Naive thymus-derived CD4-positive, alpha-beta T cell (primary cell): ENCODE measurements at regions of chr16 and their contacts with region 1.

Region 1: DNA sequence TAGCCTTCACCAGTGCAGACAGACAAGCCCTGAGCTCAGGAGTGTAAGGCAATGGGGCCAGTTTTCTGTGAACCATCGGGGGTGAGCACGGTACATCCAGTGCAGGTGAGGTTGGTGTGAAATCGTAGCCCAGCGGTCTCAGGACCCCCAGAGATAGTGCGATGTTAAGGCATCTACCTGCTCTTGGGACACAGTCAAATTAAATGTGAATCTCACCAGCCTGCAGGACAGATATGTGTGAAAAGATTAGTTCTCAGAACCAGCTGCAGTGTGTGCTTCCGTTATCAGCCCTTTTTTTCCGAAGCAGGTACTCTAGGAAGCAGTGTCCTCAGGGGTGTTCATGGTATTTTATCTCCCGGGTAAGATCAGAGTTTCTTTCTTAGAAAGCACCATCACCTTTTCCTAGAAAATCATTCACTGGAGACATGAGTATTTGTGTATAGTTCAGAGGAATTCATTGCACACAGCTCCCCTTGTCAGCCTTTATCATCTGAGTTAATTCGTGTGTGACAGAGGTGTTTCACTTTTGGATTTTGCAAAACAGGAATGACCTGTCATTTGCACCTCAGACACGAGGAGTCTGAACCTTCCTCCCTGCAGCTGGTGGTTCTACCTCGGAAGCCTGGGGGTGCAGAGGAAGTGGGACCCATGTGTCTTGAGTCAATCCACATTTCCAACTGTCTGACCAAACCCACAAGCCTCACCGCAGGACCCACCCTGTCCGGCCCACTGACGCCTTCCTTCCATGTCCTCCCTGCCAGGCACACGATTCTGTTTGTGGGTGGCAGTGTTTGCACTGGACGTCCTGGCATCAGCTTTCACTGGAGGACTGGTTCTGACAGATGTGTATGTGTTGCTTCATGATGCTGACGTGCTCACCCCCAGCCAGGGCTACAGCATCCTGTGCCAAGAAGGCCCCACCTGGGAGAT is 107.8 kb downstream of the CLEC16A start:
- DNase-seq: peak in 2 of 9 donors; percentile 11 to 81
- ATAC-seq: peak; percentile 74
- H3K4me3 ChIP-seq: no peak overlapping the region
- H3K4me3 Mint-ChIP-seq: peak overlapping the region in 8 of 10 donors; percentile 9 to 74 (median 48)
- H3K27ac ChIP-seq: peak overlapping the region; percentile 24
- H3K27ac Mint-ChIP-seq: peak overlapping the region; percentile 20 to 86 (median 60)
- H3K4me1 ChIP-seq: peaks cover 18 to 26% of the 10 kb centered on the region in 2 donors
- H3K4me1 Mint-ChIP-seq: peaks cover 28 to 87% (median 48%) of the 10 kb centered on the region in 7 donors
- H3K27me3 ChIP-seq: no peaks in the 10 kb centered on the region
- H3K27me3 Mint-ChIP-seq: no peaks in the 10 kb centered on the region

Region 2: DNA sequence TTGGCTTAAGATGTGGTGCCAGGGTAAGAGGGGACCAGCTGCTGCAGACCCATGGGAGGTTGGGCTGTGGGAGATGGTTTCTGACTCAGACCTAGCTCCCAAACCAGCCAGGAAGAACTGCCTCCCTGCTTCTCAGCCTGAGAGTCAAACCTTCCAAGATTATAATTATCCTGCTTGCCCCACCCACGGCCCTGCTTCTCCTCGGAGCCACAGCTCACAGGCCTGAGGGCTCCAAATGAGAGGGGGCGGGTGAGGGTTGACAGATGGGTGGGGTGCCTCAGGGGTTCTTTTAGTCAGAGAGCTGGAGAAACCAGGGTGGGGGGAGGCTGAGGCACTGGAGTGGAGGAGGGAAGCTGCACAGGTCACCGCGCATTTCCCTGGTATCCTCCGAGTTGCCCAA is 841.2 kb before region 1 on chr16:
- CTCF ChIA-PET with region 1: no interaction called
- POLR2A ChIA-PET with region 1: no interaction called
- intact Hi-C with region 1: no loop called
- DNase-seq: no peak
- ATAC-seq: no peak
- H3K4me3 ChIP-seq: no peak overlapping the region
- H3K4me3 Mint-ChIP-seq: no peak overlapping the region
- H3K27ac ChIP-seq: no peak overlapping the region
- H3K27ac Mint-ChIP-seq: no peak overlapping the region
- H3K4me1 ChIP-seq: no peaks in the 10 kb centered on the region
- H3K4me1 Mint-ChIP-seq: no peaks in the 10 kb centered on the region
- H3K27me3 ChIP-seq: no peaks in the 10 kb centered on the region
- H3K27me3 Mint-ChIP-seq: peaks cover 2 to 50% (median 14%) of the 10 kb centered on the region in 5 donors

Region 3: DNA sequence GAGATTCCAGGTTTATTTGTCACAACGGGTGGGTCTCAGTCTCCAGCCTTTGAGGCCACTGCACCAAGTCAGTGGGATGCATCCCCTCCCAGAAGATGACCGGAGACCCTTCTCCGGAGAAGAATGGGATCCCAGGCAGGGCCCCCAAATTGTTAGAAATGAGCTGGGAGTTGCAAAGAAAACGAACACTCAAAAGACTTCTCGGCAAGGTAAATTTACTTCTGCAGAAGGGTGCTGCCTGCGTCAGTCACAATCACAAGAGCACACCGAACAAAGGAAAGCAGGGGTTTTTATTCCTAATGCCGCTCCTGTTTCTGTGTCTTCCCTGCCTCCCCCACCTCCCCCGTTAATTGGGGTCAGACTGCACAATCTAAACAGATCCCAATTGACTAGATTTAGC is 604.9 kb before region 1 on chr16:
- CTCF ChIA-PET with region 1: no interaction called
- POLR2A ChIA-PET with region 1: no interaction called
- intact Hi-C with region 1: no loop called
- DNase-seq: no peak
- ATAC-seq: no peak
- H3K4me3 ChIP-seq: no peak overlapping the region
- H3K4me3 Mint-ChIP-seq: no peak overlapping the region
- H3K27ac ChIP-seq: no peak overlapping the region
- H3K27ac Mint-ChIP-seq: no peak overlapping the region
- H3K4me1 ChIP-seq: no peaks in the 10 kb centered on the region
- H3K4me1 Mint-ChIP-seq: peaks cover 0 to 15% (median 10%) of the 10 kb centered on the region in 7 donors
- H3K27me3 ChIP-seq: no peaks in the 10 kb centered on the region
- H3K27me3 Mint-ChIP-seq: no peaks in the 10 kb centered on the region

Region 4: GRCh38 chr16:10964039-10964890 is 87.9 kb before region 1 on chr16:
- CTCF ChIA-PET with region 1: no interaction called
- POLR2A ChIA-PET with region 1: no interaction called
- intact Hi-C with region 1: loop called in 1 of 2 experiments (anchors 1 kb)
- DNase-seq: peak; percentile 55 to 84 (median 69)
- ATAC-seq: peak; percentile 81
- H3K4me3 ChIP-seq: peak overlapping the region; percentile 3
- H3K4me3 Mint-ChIP-seq: peak overlapping the region in 6 of 10 donors; percentile 4 to 83 (median 52)
- H3K27ac ChIP-seq: no peak overlapping the region
- H3K27ac Mint-ChIP-seq: peak overlapping the region in 6 of 9 donors; percentile 47 to 91 (median 72)
- H3K4me1 ChIP-seq: peaks cover 11 to 18% of the 10 kb centered on the region in 2 donors
- H3K4me1 Mint-ChIP-seq: peaks cover 15 to 62% (median 28%) of the 10 kb centered on the region in 7 donors
- H3K27me3 ChIP-seq: no peaks in the 10 kb centered on the region
- H3K27me3 Mint-ChIP-seq: no peaks in the 10 kb centered on the region

Region 5: GRCh38 chr16:10988164-10988803 is 63.9 kb before region 1 on chr16:
- CTCF ChIA-PET with region 1: no interaction called
- POLR2A ChIA-PET with region 1: no interaction called
- intact Hi-C with region 1: loop called in 1 of 2 experiments (anchors 1 kb)
- DNase-seq: peak in 1 of 9 donors; percentile 71
- ATAC-seq: peak; percentile 51
- H3K4me3 ChIP-seq: no peak overlapping the region
- H3K4me3 Mint-ChIP-seq: peak overlapping the region; percentile 45 to 90 (median 68)
- H3K27ac ChIP-seq: no peak overlapping the region
- H3K27ac Mint-ChIP-seq: peak overlapping the region in 8 of 9 donors; percentile 2 to 80 (median 59)
- H3K4me1 ChIP-seq: peaks cover 20 to 22% of the 10 kb centered on the region in 2 donors
- H3K4me1 Mint-ChIP-seq: peaks cover 37 to 84% (median 40%) of the 10 kb centered on the region in 7 donors
- H3K27me3 ChIP-seq: no peaks in the 10 kb centered on the region
- H3K27me3 Mint-ChIP-seq: no peaks in the 10 kb centered on the region

Region 6: GRCh38 chr16:11032922-11033291 is 19.2 kb before region 1 on chr16:
- CTCF ChIA-PET with region 1: no interaction called
- POLR2A ChIA-PET with region 1: no interaction called
- intact Hi-C with region 1: no loop called
- DNase-seq: no peak
- ATAC-seq: no peak
- H3K4me3 ChIP-seq: no peak overlapping the region
- H3K4me3 Mint-ChIP-seq: no peak overlapping the region
- H3K27ac ChIP-seq: no peak overlapping the region
- H3K27ac Mint-ChIP-seq: peak overlapping the region in 3 of 9 donors; percentile 43 to 63 (median 47)
- H3K4me1 ChIP-seq: no peaks in the 10 kb centered on the region
- H3K4me1 Mint-ChIP-seq: peaks cover 0 to 29% (median 0%) of the 10 kb centered on the region in 7 donors
- H3K27me3 ChIP-seq: no peaks in the 10 kb centered on the region
- H3K27me3 Mint-ChIP-seq: no peaks in the 10 kb centered on the region

Region 7: GRCh38 chr16:11076259-11077018 is 24.3 kb after region 1 on chr16:
- CTCF ChIA-PET with region 1: no interaction called
- POLR2A ChIA-PET with region 1: no interaction called
- intact Hi-C with region 1: loop called in 1 of 2 experiments (anchors 2 kb)
- DNase-seq: peak in 1 of 9 donors; percentile 75
- ATAC-seq: peak; percentile 65
- H3K4me3 ChIP-seq: no peak overlapping the region
- H3K4me3 Mint-ChIP-seq: peak overlapping the region in 1 of 10 donors; percentile 62
- H3K27ac ChIP-seq: no peak overlapping the region
- H3K27ac Mint-ChIP-seq: peak overlapping the region in 7 of 9 donors; percentile 24 to 83 (median 66)
- H3K4me1 ChIP-seq: peaks cover 5 to 24% of the 10 kb centered on the region in 2 donors
- H3K4me1 Mint-ChIP-seq: peaks cover 27 to 91% (median 54%) of the 10 kb centered on the region in 7 donors
- H3K27me3 ChIP-seq: no peaks in the 10 kb centered on the region
- H3K27me3 Mint-ChIP-seq: no peaks in the 10 kb centered on the region

Region 8: DNA sequence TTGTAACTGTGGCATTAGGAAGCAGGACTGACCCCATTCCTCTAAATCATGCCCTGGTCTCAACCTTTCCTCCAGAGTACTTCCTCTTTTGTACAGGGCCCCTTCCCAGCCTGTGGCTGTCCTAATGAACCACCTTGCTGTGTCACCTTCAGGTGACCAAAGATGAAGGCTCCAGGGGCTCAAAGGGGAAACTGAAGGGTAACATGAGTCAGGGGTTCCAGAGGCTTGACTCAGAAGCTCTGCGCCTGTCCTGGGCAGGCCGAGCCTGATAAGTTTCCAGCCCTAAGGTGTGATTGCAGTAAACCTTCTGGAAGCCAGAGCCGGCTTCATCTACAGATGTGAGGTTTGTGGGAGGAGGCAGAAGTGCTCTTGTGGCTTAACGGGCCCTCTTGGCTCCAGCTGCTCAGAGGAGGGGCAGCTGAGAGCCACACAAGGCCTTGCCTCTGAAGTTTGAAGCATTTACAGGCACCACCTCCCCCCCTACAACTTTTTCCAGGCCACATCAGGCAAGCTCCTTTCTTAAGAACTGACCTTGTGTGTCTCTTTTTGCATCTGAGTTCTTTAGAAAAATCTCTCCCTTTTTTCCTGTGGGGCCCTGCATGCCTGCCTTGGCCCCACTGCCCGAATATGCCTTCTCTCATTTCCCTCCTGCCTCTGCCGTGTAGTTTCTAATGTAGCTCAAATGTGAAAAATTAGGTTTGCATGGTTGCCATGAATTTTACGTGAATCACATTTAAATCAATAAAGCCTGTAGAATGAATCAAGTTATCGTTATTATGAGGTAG is 42.1 kb after region 1 on chr16:
- CTCF ChIA-PET with region 1: no interaction called
- POLR2A ChIA-PET with region 1: no interaction called
- intact Hi-C with region 1: loop called in 1 of 2 experiments (anchors 1 kb)
- DNase-seq: peak in 2 of 9 donors; percentile 7 to 68
- ATAC-seq: peak; percentile 53
- H3K4me3 ChIP-seq: no peak overlapping the region
- H3K4me3 Mint-ChIP-seq: peak overlapping the region in 9 of 10 donors; percentile 29 to 71 (median 63)
- H3K27ac ChIP-seq: peak overlapping the region; percentile 55
- H3K27ac Mint-ChIP-seq: peak overlapping the region; percentile 67 to 92 (median 85)
- H3K4me1 ChIP-seq: peaks cover 19 to 33% of the 10 kb centered on the region in 2 donors
- H3K4me1 Mint-ChIP-seq: peaks cover 21 to 70% (median 42%) of the 10 kb centered on the region in 7 donors
- H3K27me3 ChIP-seq: no peaks in the 10 kb centered on the region
- H3K27me3 Mint-ChIP-seq: no peaks in the 10 kb centered on the region

Region 9: GRCh38 chr16:11224096-11224893 is 172.2 kb after region 1 on chr16:
- CTCF ChIA-PET with region 1: no interaction called
- POLR2A ChIA-PET with region 1: no interaction called
- intact Hi-C with region 1: loop called in 1 of 2 experiments (anchors 2 kb)
- DNase-seq: peak; percentile 36 to 67 (median 48)
- ATAC-seq: peak; percentile 68
- H3K4me3 ChIP-seq: peak overlapping the region; percentile 49
- H3K4me3 Mint-ChIP-seq: peak overlapping the region; percentile 78 to 87 (median 80)
- H3K27ac ChIP-seq: peak overlapping the region; percentile 91
- H3K27ac Mint-ChIP-seq: peak overlapping the region; percentile 97 to 99 (median 98)
- H3K4me1 ChIP-seq: peaks cover 30 to 36% of the 10 kb centered on the region in 2 donors
- H3K4me1 Mint-ChIP-seq: peaks cover 37 to 73% (median 52%) of the 10 kb centered on the region in 7 donors
- H3K27me3 ChIP-seq: no peaks in the 10 kb centered on the region
- H3K27me3 Mint-ChIP-seq: no peaks in the 10 kb centered on the region

Region 10: DNA sequence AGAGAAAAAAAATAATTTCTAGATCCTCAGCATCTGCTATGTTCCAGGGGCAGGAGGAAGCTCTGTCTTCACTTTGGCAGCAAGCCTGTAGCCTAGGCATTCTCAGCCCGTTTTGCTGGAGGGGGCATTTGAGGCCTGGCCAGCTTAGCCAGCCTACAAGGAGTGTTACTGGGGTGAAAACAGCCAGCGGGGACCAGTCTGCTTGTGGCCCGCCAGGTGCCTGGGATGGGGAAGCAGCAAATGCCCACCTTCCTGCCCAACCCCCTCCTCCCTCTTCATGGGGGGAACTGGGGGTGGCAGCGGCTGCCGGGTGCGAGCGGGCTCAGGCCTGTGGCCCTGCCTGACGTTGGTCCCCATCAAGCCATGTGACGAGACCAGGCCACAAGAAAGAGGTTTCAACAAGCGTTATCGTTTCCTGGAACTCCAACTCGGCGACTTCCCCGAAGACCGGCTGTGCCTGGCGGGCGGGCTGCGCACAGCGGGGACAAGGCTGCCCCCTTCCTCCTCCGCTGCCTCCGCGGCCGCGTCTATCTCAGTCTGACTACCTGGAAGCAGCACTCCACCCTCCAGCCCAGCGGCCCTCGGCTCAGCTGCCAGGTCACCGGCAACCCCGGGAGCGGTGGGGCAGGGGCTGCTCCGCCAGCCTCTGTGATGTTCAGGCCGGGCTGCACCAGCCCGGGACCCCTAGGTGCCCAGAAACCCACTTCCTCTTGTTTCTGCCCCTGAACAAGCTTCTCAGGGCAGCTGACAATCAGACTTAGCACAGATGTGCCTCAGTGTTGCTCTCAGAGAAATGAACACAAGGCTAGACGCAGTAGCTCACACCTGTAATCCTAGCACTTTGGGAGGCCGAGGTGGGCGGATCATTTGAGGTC is 180.9 kb after region 1 on chr16:
- CTCF ChIA-PET with region 1: no interaction called
- POLR2A ChIA-PET with region 1: no interaction called
- intact Hi-C with region 1: loop called in 1 of 2 experiments (anchors 2 kb)
- DNase-seq: peak; percentile 64 to 90 (median 85)
- ATAC-seq: peak; percentile 89
- H3K4me3 ChIP-seq: peak overlapping the region; percentile 50
- H3K4me3 Mint-ChIP-seq: peak overlapping the region; percentile 60 to 84 (median 76)
- H3K27ac ChIP-seq: peak overlapping the region; percentile 89
- H3K27ac Mint-ChIP-seq: peak overlapping the region; percentile 82 to 98 (median 97)
- H3K4me1 ChIP-seq: peaks cover 34 to 42% of the 10 kb centered on the region in 2 donors
- H3K4me1 Mint-ChIP-seq: peaks cover 45 to 86% (median 64%) of the 10 kb centered on the region in 7 donors
- H3K27me3 ChIP-seq: no peaks in the 10 kb centered on the region
- H3K27me3 Mint-ChIP-seq: no peaks in the 10 kb centered on the region